PC-9 (cell line): ENCODE measurements at regions of chr3 and their contacts with region 1.

Region 1: DNA sequence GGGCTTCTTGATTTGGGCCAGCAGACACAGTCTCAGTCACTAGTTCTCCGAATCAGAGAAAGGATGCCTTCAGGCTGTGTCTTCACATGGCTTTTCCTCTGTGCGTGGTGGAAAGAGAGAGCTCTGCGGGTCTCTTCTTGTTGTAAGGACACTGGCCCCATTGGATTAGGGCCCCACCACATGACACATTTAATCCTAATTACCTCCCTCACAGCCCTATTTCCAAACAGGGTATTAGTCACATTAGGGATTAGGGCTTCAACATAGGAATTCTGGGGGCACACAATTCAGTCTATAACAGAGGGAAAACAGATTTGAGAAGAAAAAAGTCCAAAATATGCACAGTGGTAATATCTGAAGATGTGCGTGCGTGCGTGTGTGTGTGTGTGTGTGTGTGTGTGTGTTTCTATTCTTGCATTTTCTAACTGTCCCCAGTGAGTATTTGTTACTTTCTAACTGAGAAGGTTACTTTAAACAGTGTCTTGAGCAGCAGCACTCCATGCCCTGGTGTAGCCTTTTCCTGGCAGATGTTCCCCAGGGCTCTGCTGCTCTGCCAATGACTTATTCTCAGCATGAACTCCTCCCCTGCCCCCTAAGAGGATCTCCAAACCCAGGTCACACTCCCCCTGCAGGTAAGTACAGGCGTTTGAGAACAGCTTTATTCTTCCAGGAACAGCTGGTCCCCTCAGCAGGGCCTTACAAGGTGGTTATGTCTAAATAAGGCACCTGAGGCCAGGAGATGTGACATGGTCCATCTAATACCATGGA is 72.9 kb downstream of the RPL39L start:
- DNase-seq: peak; percentile 23 to 60
- H3K4me3 ChIP-seq: no peak overlapping the region
- H3K27ac ChIP-seq: no peak overlapping the region
- H3K4me1 ChIP-seq: peaks cover 49% of the 10 kb centered on the region
- H3K27me3 ChIP-seq: no peaks in the 10 kb centered on the region
- CTCF ChIP-seq: peak; percentile 42; the same call in 1 of the 2 replicates

Region 2: DNA sequence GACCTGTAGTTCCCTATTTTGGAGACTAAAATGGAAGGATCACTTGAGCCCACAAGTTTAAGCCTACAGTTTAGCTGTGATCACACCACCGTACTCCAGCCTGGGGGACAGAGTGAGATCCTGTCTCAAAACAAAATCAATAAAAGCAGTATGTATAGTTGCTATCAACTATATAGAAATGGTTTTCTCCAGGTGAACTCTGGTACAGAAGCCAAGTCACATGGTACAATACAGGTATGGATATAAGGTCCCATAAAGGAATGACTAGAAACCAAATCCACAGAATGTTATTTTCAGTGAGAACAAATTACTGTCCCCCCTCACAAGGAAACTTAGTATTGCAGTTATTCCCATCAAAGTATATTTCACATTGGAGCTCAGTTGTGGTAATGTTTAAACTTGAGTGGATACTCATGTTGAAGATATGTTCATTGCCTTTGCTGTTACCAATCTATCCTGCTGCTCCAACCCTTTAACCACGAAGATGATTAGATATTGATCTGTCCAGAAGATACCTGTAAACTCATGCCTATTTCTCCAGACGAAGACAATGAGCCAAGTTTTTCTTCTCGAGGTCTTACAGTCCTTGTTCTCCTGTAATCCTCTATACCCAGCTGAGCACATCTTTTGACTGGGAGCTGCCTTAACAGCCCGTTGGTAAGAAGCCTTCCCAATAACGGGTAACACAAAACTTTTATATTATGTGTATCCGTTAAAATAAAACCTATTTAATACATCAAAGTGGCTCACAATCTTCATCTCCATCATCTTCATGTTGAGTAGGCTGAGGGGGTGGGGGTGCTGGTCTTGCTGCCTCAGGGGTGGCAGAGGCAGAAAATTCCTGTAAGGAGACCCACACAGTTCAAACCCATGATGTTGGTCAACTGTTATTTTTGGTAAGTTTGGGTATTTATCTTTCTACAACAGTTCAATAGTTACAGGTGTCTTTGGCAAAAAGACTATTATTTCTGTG is 1153.2 kb before region 1 on chr3:
- CTCF ChIA-PET with region 1: no interaction called
- POLR2A ChIA-PET with region 1: interaction called, 10 read pairs
- intact Hi-C with region 1: no loop called
- DNase-seq: no peak
- H3K4me3 ChIP-seq: no peak overlapping the region
- H3K27ac ChIP-seq: 0 out of 2 replicates have a peak overlapping the region, but pooled peaks have one; percentile 15
- H3K4me1 ChIP-seq: no peaks in the 10 kb centered on the region
- H3K27me3 ChIP-seq: no peaks in the 10 kb centered on the region
- CTCF ChIP-seq: no peak

Region 3: DNA sequence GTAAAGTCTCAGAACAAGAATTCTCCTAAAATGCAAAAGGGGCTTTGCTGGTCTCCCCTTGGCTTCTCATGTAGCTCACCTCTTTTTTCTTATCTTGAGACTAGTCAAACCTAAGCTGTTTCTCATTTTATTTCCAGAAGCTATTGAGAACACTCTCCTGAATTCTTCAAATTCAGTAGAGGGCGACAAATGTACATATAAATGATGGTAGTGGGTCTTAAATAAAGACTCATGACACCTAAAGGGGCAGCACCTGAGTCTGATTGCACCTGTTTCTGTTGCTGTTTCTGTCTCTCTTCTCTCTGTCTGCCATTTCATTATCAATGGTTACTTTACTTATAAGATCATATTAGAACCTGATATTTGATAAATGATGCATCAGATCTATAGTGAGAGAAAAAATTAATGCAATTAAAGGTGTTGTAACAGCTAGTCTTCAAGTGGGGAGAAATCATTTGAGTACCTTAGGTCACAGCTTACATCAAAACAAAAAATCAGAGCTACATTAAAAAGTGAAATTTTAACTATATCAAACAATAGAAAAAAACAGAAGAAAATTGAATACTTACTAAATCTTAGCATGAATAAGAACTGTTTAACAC is 216.9 kb before region 1 on chr3:
- CTCF ChIA-PET with region 1: interaction called, 5 read pairs
- POLR2A ChIA-PET with region 1: no interaction called
- intact Hi-C with region 1: loop called (anchors 5 kb)
- DNase-seq: peak in 1 of 2 experiments; percentile 52
- H3K4me3 ChIP-seq: no peak overlapping the region
- H3K27ac ChIP-seq: no peak overlapping the region
- H3K4me1 ChIP-seq: no peaks in the 10 kb centered on the region
- H3K27me3 ChIP-seq: 0 out of 2 replicates have a peak, but pooled peaks cover 7% of the 10 kb centered on the region
- CTCF ChIP-seq: peak; percentile 81

Region 4: DNA sequence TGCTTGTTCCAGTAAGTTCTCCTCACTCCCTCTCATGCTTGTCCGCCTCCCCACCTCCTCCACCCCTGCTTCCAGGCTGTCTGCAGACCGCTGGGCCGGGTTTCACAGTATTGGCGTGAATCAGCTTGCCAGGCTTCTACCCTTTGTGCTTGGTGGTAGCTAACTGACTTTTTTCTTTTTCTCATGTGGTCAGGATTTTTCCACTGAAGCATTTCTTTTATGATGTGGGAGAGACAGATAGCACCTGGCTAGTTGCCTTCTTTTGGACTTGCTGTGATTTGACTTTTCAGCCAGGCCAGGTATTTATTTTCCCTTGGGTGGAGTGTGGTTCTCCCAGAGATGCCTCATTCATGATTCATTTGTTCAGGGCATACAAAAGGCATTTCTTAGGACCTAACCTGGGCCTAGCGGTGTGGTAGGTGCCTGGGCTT is 75.5 kb before region 1 on chr3:
- CTCF ChIA-PET with region 1: no interaction called
- POLR2A ChIA-PET with region 1: no interaction called
- intact Hi-C with region 1: loop called (anchors 1 kb)
- DNase-seq: peak; percentile 79 to 95
- H3K4me3 ChIP-seq: no peak overlapping the region
- H3K27ac ChIP-seq: peak overlapping the region; percentile 73
- H3K4me1 ChIP-seq: peaks cover 31% of the 10 kb centered on the region
- H3K27me3 ChIP-seq: no peaks in the 10 kb centered on the region
- CTCF ChIP-seq: no peak

Region 5: DNA sequence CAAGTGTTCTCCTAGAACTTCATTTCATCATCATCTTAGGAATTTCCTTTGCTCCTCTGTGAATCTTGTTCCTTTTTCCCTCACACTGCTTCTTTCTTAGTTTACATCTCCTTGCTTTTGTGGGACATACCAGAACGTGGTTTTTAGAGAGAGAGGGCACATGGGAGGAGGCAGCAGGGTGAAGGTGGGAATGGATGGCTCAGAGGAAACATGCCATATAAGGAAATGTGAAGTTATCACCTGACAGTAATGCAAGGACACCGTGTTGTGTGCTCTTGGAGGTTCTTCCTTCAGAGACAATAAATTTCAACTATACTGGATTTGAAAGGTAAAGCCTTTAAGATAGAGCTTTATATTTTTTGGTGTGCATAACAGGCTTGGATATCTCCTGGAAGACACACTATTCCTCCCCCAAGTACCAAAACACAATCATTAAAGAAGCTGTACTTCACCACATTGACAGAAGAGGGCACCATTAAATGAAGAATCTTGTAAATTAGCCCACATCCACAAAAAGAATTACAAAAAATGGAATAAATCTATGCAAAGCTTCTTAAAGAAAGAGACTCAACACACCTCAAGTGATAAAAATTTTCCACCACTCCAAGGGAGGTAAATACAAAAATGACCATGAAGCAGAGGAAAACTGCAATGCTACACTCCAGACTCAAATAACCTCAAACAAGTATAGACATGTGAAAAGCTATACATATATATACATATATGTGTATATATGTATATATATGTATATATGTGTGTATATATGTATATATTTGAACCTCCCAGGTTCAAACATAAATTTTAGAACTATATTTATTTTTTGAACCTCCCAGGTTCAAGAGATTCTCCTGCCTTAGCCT is 46.8 kb after region 1 on chr3:
- CTCF ChIA-PET with region 1: no interaction called
- POLR2A ChIA-PET with region 1: no interaction called
- intact Hi-C with region 1: loop called (anchors 2 kb)
- DNase-seq: no peak
- H3K4me3 ChIP-seq: no peak overlapping the region
- H3K27ac ChIP-seq: no peak overlapping the region
- H3K4me1 ChIP-seq: no peaks in the 10 kb centered on the region
- H3K27me3 ChIP-seq: no peaks in the 10 kb centered on the region
- CTCF ChIP-seq: peak; percentile 88

Region 6: GRCh38 chr3:187719628-187720336 is 653.4 kb after region 1 on chr3:
- CTCF ChIA-PET with region 1: interaction called, 17 read pairs
- POLR2A ChIA-PET with region 1: no interaction called
- intact Hi-C with region 1: no loop called
- DNase-seq: no peak
- H3K4me3 ChIP-seq: no peak overlapping the region
- H3K27ac ChIP-seq: no peak overlapping the region
- H3K4me1 ChIP-seq: no peaks in the 10 kb centered on the region
- H3K27me3 ChIP-seq: no peaks in the 10 kb centered on the region
- CTCF ChIP-seq: no peak